Activated naive CD8-positive, alpha-beta T cell treated with anti-CD3 and anti-CD28 coated beads, Interleukin-2, amount 10 ng/mL, durations not matched to agents 7 days and 5 days (primary cell): ENCODE measurements at regions of chr1 and their contacts with region 1.

Region 1: GRCh38 chr1:231020139-231020601 is 19.9 kb downstream of the FAM89A start:
- DNase-seq: no peak
- ATAC-seq: peak; percentile 75
- H3K4me3 Mint-ChIP-seq: peak overlapping the region; percentile 76
- H3K27ac Mint-ChIP-seq: peak overlapping the region; percentile 58
- H3K4me1 Mint-ChIP-seq: peaks cover 12% of the 10 kb centered on the region
- H3K27me3 Mint-ChIP-seq: no peaks in the 10 kb centered on the region

Region 2: DNA sequence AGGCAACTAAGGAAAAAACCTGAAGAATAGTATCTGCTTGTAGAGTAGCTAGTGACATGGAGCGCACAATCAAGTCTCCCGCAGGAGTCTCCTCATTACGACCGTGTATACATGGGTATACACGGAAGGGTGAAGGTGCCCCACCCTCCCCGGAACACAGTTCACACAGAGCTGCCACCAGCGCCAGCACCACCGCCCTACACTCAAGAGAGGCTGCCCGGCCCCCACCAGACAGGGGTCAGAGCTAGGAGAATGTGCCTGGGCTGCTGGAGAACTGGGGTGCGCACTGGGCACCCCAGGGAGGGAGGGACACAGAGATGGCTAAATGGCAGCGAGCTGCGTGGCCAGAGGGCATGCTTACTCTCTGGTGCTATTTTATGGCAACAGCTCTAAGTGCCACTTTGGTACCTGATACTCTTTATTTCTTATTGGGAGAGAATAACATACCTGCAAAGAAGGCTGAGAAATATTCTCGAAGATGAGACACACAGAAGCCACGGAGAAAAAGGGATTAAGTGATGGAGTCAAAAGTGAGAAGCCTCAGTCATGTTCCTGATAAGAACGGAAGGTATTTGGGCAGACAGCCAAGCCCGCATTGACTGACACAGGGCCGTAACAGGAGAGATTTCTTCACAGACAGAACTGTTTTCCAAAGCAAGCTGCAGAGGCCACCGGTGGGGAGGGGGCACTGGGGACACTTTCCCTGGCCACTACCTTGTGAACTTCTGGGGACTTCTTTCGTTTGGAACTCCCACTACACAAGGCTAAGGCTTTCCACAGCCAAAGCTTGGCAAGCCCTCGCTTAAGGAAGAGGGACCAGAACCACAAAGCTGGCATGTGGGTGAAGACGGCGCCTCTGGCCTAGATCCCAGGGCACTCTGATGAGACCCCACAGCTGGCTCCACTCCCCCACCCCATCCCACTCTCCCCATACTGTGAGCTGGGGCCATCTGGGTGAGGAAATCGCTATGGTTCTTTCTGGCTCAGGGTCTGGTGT is 702.0 kb before region 1 on chr1:
- POLR2A ChIA-PET with region 1: interaction called, 11 read pairs
- DNase-seq: no peak
- ATAC-seq: no peak
- H3K4me3 Mint-ChIP-seq: no peak overlapping the region
- H3K27ac Mint-ChIP-seq: no peak overlapping the region
- H3K4me1 Mint-ChIP-seq: no peaks in the 10 kb centered on the region
- H3K27me3 Mint-ChIP-seq: peaks cover under 1% of the 10 kb centered on the region

Region 3: GRCh38 chr1:231001892-231002291 is 18.3 kb before region 1 on chr1:
- POLR2A ChIA-PET with region 1: no interaction called
- DNase-seq: no peak
- ATAC-seq: no peak
- H3K4me3 Mint-ChIP-seq: no peak overlapping the region
- H3K27ac Mint-ChIP-seq: no peak overlapping the region
- H3K4me1 Mint-ChIP-seq: no peaks in the 10 kb centered on the region
- H3K27me3 Mint-ChIP-seq: no peaks in the 10 kb centered on the region

Region 4: DNA sequence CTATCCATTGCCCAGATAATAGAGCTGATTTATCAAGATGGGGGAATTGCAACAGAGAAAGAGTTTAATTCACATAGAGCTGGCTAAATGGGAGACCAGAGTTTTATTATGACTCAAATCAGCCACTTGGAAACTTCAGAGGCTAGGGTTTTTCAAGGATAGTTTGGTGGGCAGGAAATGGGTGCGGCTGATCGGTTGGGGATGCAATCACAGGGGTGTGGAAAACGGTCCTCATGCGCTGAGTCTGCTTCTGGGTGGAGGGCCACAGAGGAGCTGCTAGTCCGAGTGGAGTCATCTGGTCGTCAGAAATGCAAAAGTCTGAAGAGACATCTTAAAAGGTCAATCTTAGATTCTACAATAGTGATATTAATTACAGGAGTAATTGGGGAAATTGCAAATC is 51.9 kb after region 1 on chr1:
- POLR2A ChIA-PET with region 1: no interaction called
- DNase-seq: no peak
- ATAC-seq: no peak
- H3K4me3 Mint-ChIP-seq: no peak overlapping the region
- H3K27ac Mint-ChIP-seq: no peak overlapping the region
- H3K4me1 Mint-ChIP-seq: no peaks in the 10 kb centered on the region
- H3K27me3 Mint-ChIP-seq: peaks cover 5% of the 10 kb centered on the region